Left cardiac atrium (tissue), 4 donors: ENCODE measurements at regions of chr16 and their contacts with region 1.

Region 1: DNA sequence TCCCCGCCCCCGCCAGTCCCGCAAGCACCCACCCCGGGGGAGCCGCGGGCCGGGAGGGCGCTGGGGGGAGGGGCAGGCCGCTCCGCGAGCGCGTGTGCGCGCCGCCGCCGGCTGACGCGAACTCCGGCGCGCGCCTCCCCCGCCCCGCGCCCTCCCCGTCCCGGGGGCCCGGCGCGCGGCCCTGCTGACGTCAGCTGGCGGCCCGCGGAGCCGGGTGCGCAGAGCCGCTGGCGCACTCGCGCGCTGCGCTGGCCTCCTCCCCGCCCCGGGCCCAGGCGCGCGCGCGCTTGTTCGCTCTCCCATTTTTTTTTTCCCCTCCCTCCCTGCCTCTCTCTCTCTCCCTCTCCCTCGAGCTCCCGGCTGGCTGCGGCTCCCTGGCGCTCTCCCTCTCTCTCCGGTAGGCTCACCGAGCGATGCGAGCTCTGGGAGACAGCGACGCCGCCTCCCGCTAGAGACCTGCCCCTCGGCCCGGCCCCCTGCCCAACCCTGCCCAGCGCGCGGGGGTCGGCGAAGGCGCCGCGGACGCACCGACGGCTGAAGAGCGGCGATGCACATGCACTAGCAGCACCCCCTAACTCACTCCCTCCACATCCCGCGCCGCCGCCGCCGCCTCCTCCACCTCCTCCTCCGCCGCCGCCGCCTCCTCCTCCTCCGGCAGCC is at the start of gene GNAO1:
- DNase-seq: peak; percentile 80
- ATAC-seq: peak; percentile 90
- total RNA-seq, gene GNAO1: 65.3 to 92.9 TPM

Region 2: DNA sequence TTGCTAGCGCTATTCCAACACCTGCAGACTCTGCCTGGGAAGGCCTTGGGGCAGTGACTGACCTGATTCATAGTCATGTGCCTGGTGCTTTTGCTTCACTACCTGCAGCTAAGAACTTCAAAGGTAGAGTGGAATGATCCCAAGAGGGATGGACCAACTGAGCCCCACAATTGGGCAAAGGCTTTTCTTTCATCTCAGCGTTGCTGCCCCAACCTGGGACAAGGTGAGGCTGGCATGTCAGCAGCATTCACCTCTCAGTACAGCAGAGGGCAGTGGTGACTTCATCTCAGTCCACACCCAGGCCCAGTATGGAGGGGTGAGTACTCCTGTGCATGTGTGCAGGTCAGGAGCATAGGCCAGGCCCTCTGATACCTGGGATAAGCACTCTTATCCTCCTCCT is 149.6 kb before region 1 on chr16:
- intact Hi-C with region 1: loop called in 1 of 2 experiments (anchors 10 kb)
- DNase-seq: peak; percentile 22
- ATAC-seq: peak; percentile 83 to 90

Region 3: DNA sequence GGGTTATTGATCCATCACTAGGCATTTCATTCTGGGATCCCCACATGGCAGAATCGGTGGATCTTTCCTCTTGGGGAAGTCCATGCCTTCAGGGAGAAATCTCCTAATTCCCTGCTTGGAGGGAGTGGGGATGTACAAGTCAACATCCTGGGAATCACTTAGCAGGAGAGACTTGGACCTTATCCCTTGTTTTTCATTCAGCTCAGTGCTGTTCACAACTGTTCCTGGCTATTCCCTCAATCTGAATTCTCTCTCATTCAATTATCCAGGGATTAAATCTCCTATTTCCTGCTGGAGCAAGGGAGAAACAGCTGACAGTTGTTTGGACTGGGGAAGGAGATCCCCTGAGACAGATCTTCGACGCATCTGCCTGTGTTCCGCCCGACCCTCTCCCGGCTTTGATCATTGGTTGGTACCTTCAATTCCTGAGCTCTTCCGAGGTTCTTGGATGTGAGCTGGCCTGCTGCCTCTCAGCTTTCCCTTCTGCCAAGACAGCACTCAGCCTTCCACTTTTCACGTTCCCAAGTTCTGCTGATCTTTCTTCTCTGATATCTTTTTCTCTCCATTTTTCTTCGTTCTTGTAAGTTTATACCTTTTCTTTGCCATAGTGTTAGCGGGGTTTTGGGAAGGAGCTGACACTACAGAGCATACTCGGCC is 115.4 kb before region 1 on chr16:
- intact Hi-C with region 1: no loop called
- DNase-seq: no peak
- ATAC-seq: no peak

Region 4: GRCh38 chr16:56262148-56262547 is 70.9 kb after region 1 on chr16:
- intact Hi-C with region 1: loop called in 1 of 2 experiments (anchors 5 kb)
- DNase-seq: no peak
- ATAC-seq: peak in 1 of 2 donors; percentile 13

Region 5: DNA sequence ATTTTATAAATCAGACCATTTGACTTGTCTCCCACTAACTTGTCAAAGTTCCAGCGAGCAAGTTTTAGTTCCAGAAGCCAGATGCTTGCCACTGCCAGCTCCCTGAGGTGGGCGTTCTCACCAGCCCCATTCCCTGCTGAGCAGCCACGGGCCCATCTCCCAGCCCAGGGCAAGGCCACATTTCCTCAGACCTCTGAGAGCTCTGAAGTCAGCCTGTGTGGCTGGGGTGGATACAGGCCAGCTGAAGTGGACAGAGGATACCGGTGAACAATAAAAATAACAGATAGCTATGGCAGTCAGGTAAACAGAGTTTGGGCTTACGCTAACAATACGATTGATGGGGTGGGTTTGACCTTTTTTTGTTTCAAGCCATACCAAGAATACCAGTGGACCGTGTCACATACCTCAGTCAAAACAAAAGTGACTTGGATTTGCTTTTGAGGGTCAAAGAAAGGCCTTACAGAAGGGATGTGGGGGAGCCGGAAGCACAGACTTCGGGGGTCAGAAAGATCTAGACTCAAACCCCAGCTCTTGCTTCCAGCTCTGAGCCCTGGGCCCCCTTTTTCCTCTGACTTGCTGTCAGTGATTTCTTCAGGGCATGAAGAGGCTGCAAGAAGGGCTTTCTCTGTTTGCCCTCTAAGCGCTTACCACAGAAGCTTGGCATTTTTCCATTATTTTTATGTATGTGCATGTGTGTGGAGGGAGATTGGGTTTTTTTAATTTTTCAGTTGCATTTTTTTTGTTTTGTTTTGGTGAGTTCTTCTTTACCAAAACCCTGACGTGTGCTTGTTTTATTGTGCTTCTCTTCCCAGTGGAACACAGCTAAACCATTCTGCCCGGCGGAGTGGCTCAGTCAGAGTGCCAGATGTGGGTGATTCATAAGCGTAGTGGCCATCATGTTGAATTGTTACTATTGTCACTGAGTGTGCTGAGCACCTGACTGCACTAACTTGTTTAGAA is 109.9 kb after region 1 on chr16:
- intact Hi-C with region 1: no loop called
- DNase-seq: no peak
- ATAC-seq: peak in 1 of 2 donors; percentile 35

Region 6: DNA sequence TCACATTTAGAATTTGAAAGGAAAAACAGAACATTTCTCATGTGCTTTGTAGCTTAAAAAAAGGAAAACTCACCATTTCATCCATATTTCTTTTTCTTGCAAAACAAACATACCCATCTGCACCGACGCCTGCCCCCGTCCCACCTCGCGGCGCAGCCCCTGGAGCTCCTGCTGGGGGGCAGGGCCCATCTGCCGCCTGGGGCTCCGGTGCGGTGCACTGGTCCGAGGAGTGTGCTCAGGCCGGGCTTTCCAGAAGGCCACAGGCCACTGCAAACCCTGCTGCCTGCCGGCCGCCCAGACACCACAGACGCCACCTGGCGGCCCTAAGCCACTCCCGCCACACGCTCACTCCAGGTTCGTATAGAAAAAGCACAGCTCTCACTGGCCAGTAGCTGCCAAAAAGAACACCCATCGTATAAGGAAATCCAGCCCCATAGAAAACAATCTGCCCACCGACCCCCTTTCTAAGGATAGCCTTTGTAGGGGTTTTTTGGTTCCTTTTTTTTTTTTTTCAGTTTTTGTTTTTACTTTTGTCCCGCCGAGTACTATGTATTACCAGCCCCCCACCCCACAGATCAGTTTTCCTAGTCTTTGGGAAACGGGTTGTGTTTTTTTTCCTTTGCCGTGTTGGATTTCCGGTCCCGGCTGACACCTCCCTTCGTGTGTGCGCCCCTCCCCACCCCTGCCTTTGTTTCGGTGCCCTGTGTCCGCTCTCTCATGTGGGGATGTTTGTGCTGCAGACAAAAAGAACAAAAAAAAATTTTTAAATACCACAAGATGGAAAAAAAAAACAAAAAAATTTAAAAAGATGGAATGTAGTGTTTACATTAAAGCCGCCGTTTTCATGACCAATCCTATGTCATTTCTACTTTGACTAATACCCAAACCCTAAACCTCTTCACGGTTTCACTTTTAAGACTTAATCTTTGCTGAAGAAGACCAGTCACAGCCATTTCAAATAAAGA is 165.3 kb after region 1 on chr16:
- intact Hi-C with region 1: no loop called
- DNase-seq: peak; percentile 84
- ATAC-seq: peak; percentile 93